Activated B cell treated with CpG ODN at 0.5 μM for 24 hours (primary cell): ENCODE measurements at regions of chr9 and their contacts with region 1.

Region 1: GRCh38 chr9:80004714-80005113 is 432.9 kb downstream of the TLE4 start:
- DNase-seq: no peak
- ATAC-seq: no peak
- H3K4me3 Mint-ChIP-seq: no peak overlapping the region
- H3K27ac Mint-ChIP-seq: no peak overlapping the region
- H3K4me1 Mint-ChIP-seq: no peaks in the 10 kb centered on the region
- H3K27me3 Mint-ChIP-seq: no peaks in the 10 kb centered on the region
- CTCF ChIP-seq: no peak

Region 2: DNA sequence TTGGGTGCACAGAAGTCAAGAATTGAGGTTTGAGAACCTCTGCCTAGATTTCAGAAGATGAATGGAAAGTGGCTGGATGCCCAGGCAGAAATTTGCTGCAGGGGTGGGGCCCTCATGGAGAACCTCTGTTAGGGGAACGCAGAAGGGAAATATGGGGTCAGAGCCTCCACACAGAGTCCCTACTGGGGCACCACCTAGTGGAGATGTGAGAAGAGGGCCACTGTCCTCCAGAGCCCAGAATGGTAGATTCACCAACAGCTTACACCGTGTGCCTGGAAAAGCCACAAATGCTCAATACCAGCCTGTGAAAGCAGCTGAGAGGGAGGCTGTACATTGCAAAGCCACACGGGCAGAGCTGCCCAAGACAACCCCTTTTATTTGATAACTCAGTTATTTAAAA is 49.4 kb before region 1 on chr9:
- CTCF ChIA-PET with region 1: no interaction called
- POLR2A ChIA-PET with region 1: no interaction called
- intact Hi-C with region 1: loop called (anchors 1 kb)
- DNase-seq: no peak
- ATAC-seq: no peak
- H3K4me3 Mint-ChIP-seq: no peak overlapping the region
- H3K27ac Mint-ChIP-seq: no peak overlapping the region
- H3K4me1 Mint-ChIP-seq: no peaks in the 10 kb centered on the region
- H3K27me3 Mint-ChIP-seq: no peaks in the 10 kb centered on the region
- CTCF ChIP-seq: no peak

Region 3: GRCh38 chr9:80020530-80020929 is 15.8 kb after region 1 on chr9:
- CTCF ChIA-PET with region 1: no interaction called
- POLR2A ChIA-PET with region 1: no interaction called
- intact Hi-C with region 1: no loop called
- DNase-seq: no peak
- ATAC-seq: no peak
- H3K4me3 Mint-ChIP-seq: no peak overlapping the region
- H3K27ac Mint-ChIP-seq: no peak overlapping the region
- H3K4me1 Mint-ChIP-seq: peaks cover 4% of the 10 kb centered on the region
- H3K27me3 Mint-ChIP-seq: no peaks in the 10 kb centered on the region
- CTCF ChIP-seq: no peak